CD4-positive, alpha-beta memory T cell (primary cell): ENCODE measurements at regions of chr12 and their contacts with region 1.

Region 1: GRCh38 chr12:12032851-12033588 is 37.7 kb upstream of the BCL2L14 start:
- DNase-seq: peak; percentile 66 to 74 (median 70)
- H3K4me3 ChIP-seq: peak overlapping the region; percentile 52 to 80
- H3K4me3 Mint-ChIP-seq: peak overlapping the region; percentile 77 to 93 (median 86)
- H3K27ac ChIP-seq: peak overlapping the region; percentile 53
- H3K27ac Mint-ChIP-seq: peak overlapping the region; percentile 77 to 96 (median 92)
- H3K4me1 ChIP-seq: peaks cover 20% of the 10 kb centered on the region
- H3K4me1 Mint-ChIP-seq: peaks cover 19 to 24% (median 21%) of the 10 kb centered on the region in 4 donors
- H3K27me3 ChIP-seq: no peaks in the 10 kb centered on the region
- H3K27me3 Mint-ChIP-seq: peaks cover 0 to 3% of the 10 kb centered on the region in 2 donors

Region 2: GRCh38 chr12:11039171-11039570 is 993.8 kb before region 1 on chr12:
- CTCF ChIA-PET with region 1: no interaction called
- POLR2A ChIA-PET with region 1: no interaction called
- intact Hi-C with region 1: no loop called
- DNase-seq: no peak
- H3K4me3 ChIP-seq: no peak overlapping the region
- H3K4me3 Mint-ChIP-seq: no peak overlapping the region
- H3K27ac ChIP-seq: no peak overlapping the region
- H3K27ac Mint-ChIP-seq: no peak overlapping the region
- H3K4me1 ChIP-seq: no peaks in the 10 kb centered on the region
- H3K4me1 Mint-ChIP-seq: peaks cover 0 to 16% (median 6%) of the 10 kb centered on the region in 4 donors
- H3K27me3 ChIP-seq: no peaks in the 10 kb centered on the region
- H3K27me3 Mint-ChIP-seq: no peaks in the 10 kb centered on the region

Region 3: GRCh38 chr12:11621797-11622423 is 411.1 kb before region 1 on chr12:
- CTCF ChIA-PET with region 1: interaction called, 48 read pairs
- POLR2A ChIA-PET with region 1: interaction called, 5 read pairs
- intact Hi-C with region 1: loop called (anchors 1 kb)
- DNase-seq: peak; percentile 21 to 43 (median 34)
- H3K4me3 ChIP-seq: no peak overlapping the region
- H3K4me3 Mint-ChIP-seq: no peak overlapping the region
- H3K27ac ChIP-seq: no peak overlapping the region
- H3K27ac Mint-ChIP-seq: peak overlapping the region in 2 of 7 donors; percentile 39 to 91
- H3K4me1 ChIP-seq: no peaks in the 10 kb centered on the region
- H3K4me1 Mint-ChIP-seq: peaks cover 0 to 6% (median 3%) of the 10 kb centered on the region in 4 donors
- H3K27me3 ChIP-seq: no peaks in the 10 kb centered on the region
- H3K27me3 Mint-ChIP-seq: no peaks in the 10 kb centered on the region

Region 4: DNA sequence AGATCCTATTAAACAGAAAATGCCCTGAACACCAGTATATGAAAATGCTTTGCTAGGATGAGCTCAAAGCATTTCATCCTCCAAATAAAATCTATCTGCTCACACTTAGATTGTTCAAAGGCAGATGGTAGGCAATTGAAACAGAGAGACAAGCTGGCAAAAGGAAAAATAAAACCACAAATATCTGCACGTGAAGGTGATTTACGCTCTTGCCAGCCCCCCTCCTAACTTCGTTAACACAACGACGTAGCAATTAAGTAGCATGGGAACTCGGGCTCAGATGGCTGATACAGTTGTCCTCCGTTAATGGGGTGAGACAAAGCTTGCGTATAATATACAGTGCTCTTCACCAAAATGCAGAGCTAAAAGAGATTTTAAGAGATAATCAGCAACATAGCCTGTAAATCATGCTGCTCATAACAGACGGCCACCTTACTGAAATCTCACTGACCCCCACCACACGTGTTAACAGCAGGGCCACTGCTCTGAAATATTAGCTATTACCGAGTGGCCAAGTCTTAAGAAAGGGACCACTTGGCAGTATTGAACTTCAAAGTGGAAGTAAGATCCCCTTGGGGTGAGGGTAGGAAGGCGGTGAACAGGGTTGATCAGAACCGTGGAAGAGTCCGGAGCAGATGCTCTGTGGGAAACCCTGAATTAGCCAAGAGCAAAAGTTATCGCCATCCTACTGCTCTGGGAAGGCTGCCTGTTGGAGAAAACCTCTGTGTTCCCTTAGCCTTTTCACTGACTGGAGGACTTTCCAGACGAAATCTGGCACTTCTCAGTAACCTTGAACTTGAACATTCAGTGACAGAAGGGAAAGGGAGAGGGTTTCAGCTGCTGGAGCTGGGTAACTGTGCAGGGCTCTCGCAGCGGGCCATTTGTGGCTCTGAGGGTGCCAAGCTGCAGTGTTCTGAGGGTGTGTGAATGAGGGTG is 360.5 kb before region 1 on chr12:
- CTCF ChIA-PET with region 1: interaction called, 12 read pairs
- POLR2A ChIA-PET with region 1: no interaction called
- intact Hi-C with region 1: no loop called
- DNase-seq: no peak
- H3K4me3 ChIP-seq: no peak overlapping the region
- H3K4me3 Mint-ChIP-seq: peak overlapping the region in 1 of 8 donors; percentile 3
- H3K27ac ChIP-seq: no peak overlapping the region
- H3K27ac Mint-ChIP-seq: peak overlapping the region in 6 of 7 donors; percentile 6 to 56 (median 42)
- H3K4me1 ChIP-seq: peaks cover 48% of the 10 kb centered on the region
- H3K4me1 Mint-ChIP-seq: peaks cover 57 to 90% (median 73%) of the 10 kb centered on the region in 4 donors
- H3K27me3 ChIP-seq: no peaks in the 10 kb centered on the region
- H3K27me3 Mint-ChIP-seq: no peaks in the 10 kb centered on the region

Region 5: GRCh38 chr12:11758510-11759493 is 274.2 kb before region 1 on chr12:
- CTCF ChIA-PET with region 1: interaction called, 14 read pairs
- POLR2A ChIA-PET with region 1: no interaction called
- intact Hi-C with region 1: no loop called
- DNase-seq: peak in 1 of 5 donors; percentile 25
- H3K4me3 ChIP-seq: no peak overlapping the region
- H3K4me3 Mint-ChIP-seq: peak overlapping the region in 1 of 8 donors; percentile 23
- H3K27ac ChIP-seq: no peak overlapping the region
- H3K27ac Mint-ChIP-seq: peak overlapping the region; percentile 33 to 90 (median 68)
- H3K4me1 ChIP-seq: peaks cover 30% of the 10 kb centered on the region
- H3K4me1 Mint-ChIP-seq: peaks cover 24 to 49% (median 41%) of the 10 kb centered on the region in 4 donors
- H3K27me3 ChIP-seq: no peaks in the 10 kb centered on the region
- H3K27me3 Mint-ChIP-seq: no peaks in the 10 kb centered on the region

Region 6: GRCh38 chr12:11969437-11970154 is 63.4 kb before region 1 on chr12:
- CTCF ChIA-PET with region 1: no interaction called
- POLR2A ChIA-PET with region 1: no interaction called
- intact Hi-C with region 1: no loop called
- DNase-seq: no peak
- H3K4me3 ChIP-seq: no peak overlapping the region
- H3K4me3 Mint-ChIP-seq: no peak overlapping the region
- H3K27ac ChIP-seq: no peak overlapping the region
- H3K27ac Mint-ChIP-seq: no peak overlapping the region
- H3K4me1 ChIP-seq: no peaks in the 10 kb centered on the region
- H3K4me1 Mint-ChIP-seq: peaks cover 4 to 19% (median 13%) of the 10 kb centered on the region in 4 donors
- H3K27me3 ChIP-seq: no peaks in the 10 kb centered on the region
- H3K27me3 Mint-ChIP-seq: no peaks in the 10 kb centered on the region

Region 7: GRCh38 chr12:11981121-11981733 is 51.8 kb before region 1 on chr12:
- CTCF ChIA-PET with region 1: interaction called, 15 read pairs
- POLR2A ChIA-PET with region 1: interaction called, 18 read pairs
- intact Hi-C with region 1: loop called (anchors 1 kb)
- DNase-seq: peak; percentile 86 to 94 (median 88)
- H3K4me3 ChIP-seq: peak overlapping the region; percentile 4 to 29
- H3K4me3 Mint-ChIP-seq: peak overlapping the region; percentile 2 to 74 (median 70)
- H3K27ac ChIP-seq: peak overlapping the region; percentile 74
- H3K27ac Mint-ChIP-seq: peak overlapping the region; percentile 88 to 99 (median 97)
- H3K4me1 ChIP-seq: peaks cover 59% of the 10 kb centered on the region
- H3K4me1 Mint-ChIP-seq: peaks cover 47 to 61% (median 57%) of the 10 kb centered on the region in 4 donors
- H3K27me3 ChIP-seq: no peaks in the 10 kb centered on the region
- H3K27me3 Mint-ChIP-seq: no peaks in the 10 kb centered on the region

Region 8: GRCh38 chr12:12334367-12335040 is 301.5 kb after region 1 on chr12:
- CTCF ChIA-PET with region 1: interaction called, 21 read pairs
- POLR2A ChIA-PET with region 1: no interaction called
- intact Hi-C with region 1: no loop called
- DNase-seq: peak; percentile 48 to 61 (median 55)
- H3K4me3 ChIP-seq: no peak overlapping the region
- H3K4me3 Mint-ChIP-seq: peak overlapping the region in 3 of 8 donors; percentile 26 to 38 (median 29)
- H3K27ac ChIP-seq: no peak overlapping the region
- H3K27ac Mint-ChIP-seq: peak overlapping the region in 3 of 7 donors; percentile 32 to 63 (median 45)
- H3K4me1 ChIP-seq: peaks cover 9% of the 10 kb centered on the region
- H3K4me1 Mint-ChIP-seq: peaks cover 8 to 24% (median 11%) of the 10 kb centered on the region in 4 donors
- H3K27me3 ChIP-seq: no peaks in the 10 kb centered on the region
- H3K27me3 Mint-ChIP-seq: no peaks in the 10 kb centered on the region